ENCODE measurements at regions of chr14 and their contacts with region 1.

Region 1: GRCh38 chr14:93115069-93115820 is 480 bp downstream of the ITPK1 start:
- DNase-seq: peak; percentile 90
- ATAC-seq: peak; percentile 80
- H3K4me3 Mint-ChIP-seq: peak overlapping the region; percentile 78
- H3K27ac Mint-ChIP-seq: no peak overlapping the region
- H3K4me1 Mint-ChIP-seq: peaks cover 23% of the 10 kb centered on the region
- H3K27me3 Mint-ChIP-seq: peaks cover 2% of the 10 kb centered on the region

Region 2: GRCh38 chr14:93045965-93046704 is 69.1 kb before region 1 on chr14:
- CTCF ChIA-PET with region 1: no interaction called
- POLR2A ChIA-PET with region 1: no interaction called
- intact Hi-C with region 1: no loop called
- DNase-seq: no peak
- ATAC-seq: no peak
- H3K4me3 Mint-ChIP-seq: no peak overlapping the region
- H3K27ac Mint-ChIP-seq: peak overlapping the region; percentile 33
- H3K4me1 Mint-ChIP-seq: peaks cover 19% of the 10 kb centered on the region
- H3K27me3 Mint-ChIP-seq: no peaks in the 10 kb centered on the region

Region 3: GRCh38 chr14:93096691-93097322 is 18.4 kb before region 1 on chr14:
- CTCF ChIA-PET with region 1: interaction called, 22 read pairs
- POLR2A ChIA-PET with region 1: no interaction called
- intact Hi-C with region 1: no loop called
- DNase-seq: no peak
- ATAC-seq: no peak
- H3K4me3 Mint-ChIP-seq: no peak overlapping the region
- H3K27ac Mint-ChIP-seq: no peak overlapping the region
- H3K4me1 Mint-ChIP-seq: no peaks in the 10 kb centered on the region
- H3K27me3 Mint-ChIP-seq: no peaks in the 10 kb centered on the region

Region 4: GRCh38 chr14:93132470-93133065 is 17.3 kb after region 1 on chr14:
- CTCF ChIA-PET with region 1: interaction called, 43 read pairs
- POLR2A ChIA-PET with region 1: interaction called, 3 read pairs
- intact Hi-C with region 1: no loop called
- DNase-seq: peak; percentile 40
- ATAC-seq: peak; percentile 49
- H3K4me3 Mint-ChIP-seq: no peak overlapping the region
- H3K27ac Mint-ChIP-seq: no peak overlapping the region
- H3K4me1 Mint-ChIP-seq: no peaks in the 10 kb centered on the region
- H3K27me3 Mint-ChIP-seq: peaks cover 3% of the 10 kb centered on the region

Region 5: DNA sequence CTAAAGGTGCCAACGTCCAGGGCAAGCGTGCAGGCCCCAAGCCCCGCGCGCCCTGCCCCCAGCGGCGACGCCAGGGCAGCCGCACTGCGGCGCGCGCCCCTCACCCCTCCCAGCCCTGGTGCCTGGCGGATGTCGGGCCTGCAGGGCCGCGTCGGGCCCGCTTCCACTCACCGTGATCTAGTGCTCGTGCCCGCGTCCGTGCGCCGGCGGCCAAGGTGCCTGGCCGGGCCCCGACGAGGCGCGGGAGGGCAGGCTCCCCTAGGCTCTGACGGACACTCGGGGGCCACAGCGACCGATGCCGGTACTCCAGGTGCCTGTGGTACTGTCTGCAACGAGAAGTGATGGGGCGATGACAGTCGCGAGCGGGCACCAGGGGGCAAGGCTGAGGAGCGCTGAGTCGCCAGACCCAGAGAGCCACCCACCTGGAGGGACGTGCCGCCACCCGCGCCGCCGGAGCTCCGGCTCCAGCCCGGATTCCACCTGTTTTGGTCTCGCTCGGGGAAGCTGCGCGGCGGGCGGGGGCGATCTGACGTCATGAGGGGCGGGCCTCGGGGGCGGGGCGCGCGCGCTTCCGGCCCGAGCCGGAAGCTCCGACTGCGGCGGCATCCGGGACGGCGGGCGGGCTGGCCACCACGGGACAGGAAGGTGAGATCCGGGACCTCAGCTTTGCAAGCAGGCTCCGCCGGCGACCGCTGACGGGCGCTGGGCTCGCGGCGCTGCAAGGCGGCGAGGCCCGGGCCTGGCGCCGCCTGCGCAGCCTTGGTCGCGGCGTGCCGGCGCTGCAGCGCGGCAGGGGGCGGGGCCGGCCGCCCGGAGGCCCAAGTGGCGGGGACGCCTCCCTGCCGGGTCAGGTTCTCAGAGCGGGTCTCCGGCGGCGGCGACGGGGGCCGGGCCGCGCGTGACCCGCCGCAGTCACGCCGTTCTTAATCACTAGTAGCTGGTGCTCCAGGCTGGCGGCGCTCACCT is 69.4 kb after region 1 on chr14 and contains the starts of genes LYSET and MOAP1:
- CTCF ChIA-PET with region 1: interaction called, 17 read pairs
- POLR2A ChIA-PET with region 1: interaction called, 5 read pairs
- intact Hi-C with region 1: loop called (anchors 1 to 5 kb)
- DNase-seq: peak; percentile 95
- ATAC-seq: peak; percentile 90
- H3K4me3 Mint-ChIP-seq: peak within 1 kb of the TSS; percentile 91
- H3K27ac Mint-ChIP-seq: peak within 1 kb of the TSS; percentile 93
- H3K4me1 Mint-ChIP-seq: peaks cover 40% of the 10 kb centered on the region
- H3K27me3 Mint-ChIP-seq: no peaks in the 10 kb centered on the region
- total RNA-seq, gene LYSET: 9.9 to 10.2 TPM
- total RNA-seq, gene MOAP1: 11.7 to 15.9 TPM

Region 6: GRCh38 chr14:93219103-93219726 is 104.0 kb after region 1 on chr14:
- CTCF ChIA-PET with region 1: interaction called, 6 read pairs
- POLR2A ChIA-PET with region 1: no interaction called
- intact Hi-C with region 1: loop called in 1 of 2 experiments (anchors 1 kb)
- DNase-seq: peak; percentile 57
- ATAC-seq: peak; percentile 63
- H3K4me3 Mint-ChIP-seq: no peak overlapping the region
- H3K27ac Mint-ChIP-seq: no peak overlapping the region
- H3K4me1 Mint-ChIP-seq: no peaks in the 10 kb centered on the region
- H3K27me3 Mint-ChIP-seq: no peaks in the 10 kb centered on the region

Region 7: GRCh38 chr14:93543766-93544165 is 428.5 kb after region 1 on chr14:
- CTCF ChIA-PET with region 1: interaction called, 6 read pairs
- POLR2A ChIA-PET with region 1: no interaction called
- intact Hi-C with region 1: loop called in 1 of 2 experiments (anchors 10 kb)
- DNase-seq: no peak
- ATAC-seq: no peak
- H3K4me3 Mint-ChIP-seq: no peak overlapping the region
- H3K27ac Mint-ChIP-seq: no peak overlapping the region
- H3K4me1 Mint-ChIP-seq: no peaks in the 10 kb centered on the region
- H3K27me3 Mint-ChIP-seq: peaks cover 12% of the 10 kb centered on the region

Measured in activated CD4-positive, alpha-beta T cell treated with anti-CD3 and anti-CD28 coated beads for 36 hours (primary cell).